Activated CD4-positive, alpha-beta memory T cell treated with anti-CD3 and anti-CD28 coated beads, Interleukin-2, amount 10 ng/mL, durations not matched to agents 7 days and 5 days (primary cell): ENCODE measurements at regions of chr13 and their contacts with region 1.

Region 1: DNA sequence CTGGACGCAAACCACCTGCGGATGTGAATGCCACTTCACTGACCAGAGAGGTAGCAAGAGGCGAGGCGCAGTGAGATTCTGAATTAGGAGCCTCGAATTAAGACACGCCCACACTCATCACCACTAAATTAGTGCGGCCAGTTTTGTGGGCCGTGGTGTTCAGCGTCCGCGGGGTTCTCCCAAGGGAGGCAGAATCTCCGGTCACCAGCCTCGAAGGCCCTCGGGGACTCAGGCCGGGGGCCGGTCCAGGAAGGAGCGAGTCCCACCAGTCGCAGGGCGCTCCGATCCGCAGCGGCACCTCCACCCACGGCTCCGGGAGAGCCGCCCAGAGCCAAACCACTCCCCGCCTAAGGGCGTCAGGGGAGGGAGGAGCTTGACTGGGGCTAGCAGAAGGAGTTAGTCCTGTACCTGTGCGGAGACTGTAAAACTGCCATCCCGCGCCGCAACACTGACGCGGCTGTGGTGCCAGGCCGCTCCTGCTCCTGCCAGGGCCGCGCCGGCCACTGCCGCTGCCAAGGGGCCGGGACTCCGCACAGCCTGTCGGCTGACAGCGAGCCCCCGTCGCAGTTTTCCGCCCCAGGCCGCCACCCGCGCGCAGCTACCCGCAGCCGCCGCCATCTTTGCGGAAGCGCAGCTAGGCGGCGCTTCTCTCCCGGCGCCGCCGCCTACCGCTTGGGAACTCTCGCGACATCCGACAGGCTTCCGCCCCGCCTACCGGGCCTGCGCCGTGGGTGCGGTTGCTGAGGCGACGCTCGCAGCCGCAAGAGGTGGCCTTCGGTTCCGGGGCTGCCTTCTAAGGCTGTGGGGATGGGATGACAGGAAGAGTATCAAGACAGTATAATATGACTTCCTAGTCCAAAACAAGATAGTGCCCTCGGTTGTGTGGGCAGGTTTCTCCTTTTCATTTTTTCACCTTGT is at the start of gene MICU2:
- DNase-seq: peak; percentile 96
- H3K4me3 Mint-ChIP-seq: peak within 1 kb of the TSS; percentile 85
- H3K27ac Mint-ChIP-seq: peak within 1 kb of the TSS; percentile 79
- H3K4me1 Mint-ChIP-seq: peaks cover 35% of the 10 kb centered on the region
- H3K27me3 Mint-ChIP-seq: peaks cover 17% of the 10 kb centered on the region
- total RNA-seq, gene MICU2: 33.8 to 34.0 TPM

Region 2: GRCh38 chr13:21458813-21459701 is 144.7 kb before region 1 on chr13 and contains the start of gene ZDHHC20:
- CTCF ChIA-PET with region 1: no interaction called
- POLR2A ChIA-PET with region 1: interaction called, 14 read pairs
- DNase-seq: peak; percentile 91
- H3K4me3 Mint-ChIP-seq: peak within 1 kb of the TSS; percentile 85
- H3K27ac Mint-ChIP-seq: peak within 1 kb of the TSS; percentile 91
- H3K4me1 Mint-ChIP-seq: peaks cover 34% of the 10 kb centered on the region
- H3K27me3 Mint-ChIP-seq: no peaks in the 10 kb centered on the region
- total RNA-seq, gene ZDHHC20: 92.0 to 103 TPM

Region 3: GRCh38 chr13:21579754-21580316 is 24.0 kb before region 1 on chr13:
- CTCF ChIA-PET with region 1: interaction called, 10 read pairs
- POLR2A ChIA-PET with region 1: interaction called, 16 read pairs
- DNase-seq: no peak
- H3K4me3 Mint-ChIP-seq: no peak overlapping the region
- H3K27ac Mint-ChIP-seq: peak overlapping the region; percentile 72
- H3K4me1 Mint-ChIP-seq: peaks cover 31% of the 10 kb centered on the region
- H3K27me3 Mint-ChIP-seq: no peaks in the 10 kb centered on the region

Region 4: DNA sequence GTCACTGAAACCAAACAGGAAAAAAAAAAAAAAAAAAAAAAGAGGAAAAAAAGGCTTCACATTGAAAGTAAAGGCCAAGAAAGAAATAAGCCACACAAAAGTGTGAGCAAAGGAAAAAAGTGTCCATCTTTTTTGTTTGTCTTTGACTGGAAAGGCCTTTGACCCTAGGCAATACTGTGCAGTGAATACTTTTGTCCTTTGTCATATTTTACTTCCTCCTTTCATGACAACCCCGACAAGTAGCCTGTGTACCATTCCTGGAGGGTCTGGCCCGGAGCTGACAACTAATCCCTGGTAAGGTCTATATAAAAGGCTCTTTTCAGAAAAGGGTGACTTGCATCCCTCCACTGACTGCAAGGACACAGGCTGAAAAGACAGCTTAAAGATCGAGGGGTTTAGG is 13.1 kb after region 1 on chr13:
- CTCF ChIA-PET with region 1: no interaction called
- POLR2A ChIA-PET with region 1: interaction called, 23 read pairs
- DNase-seq: no peak
- H3K4me3 Mint-ChIP-seq: no peak overlapping the region
- H3K27ac Mint-ChIP-seq: no peak overlapping the region
- H3K4me1 Mint-ChIP-seq: peaks cover 4% of the 10 kb centered on the region
- H3K27me3 Mint-ChIP-seq: peaks cover 17% of the 10 kb centered on the region

Region 5: DNA sequence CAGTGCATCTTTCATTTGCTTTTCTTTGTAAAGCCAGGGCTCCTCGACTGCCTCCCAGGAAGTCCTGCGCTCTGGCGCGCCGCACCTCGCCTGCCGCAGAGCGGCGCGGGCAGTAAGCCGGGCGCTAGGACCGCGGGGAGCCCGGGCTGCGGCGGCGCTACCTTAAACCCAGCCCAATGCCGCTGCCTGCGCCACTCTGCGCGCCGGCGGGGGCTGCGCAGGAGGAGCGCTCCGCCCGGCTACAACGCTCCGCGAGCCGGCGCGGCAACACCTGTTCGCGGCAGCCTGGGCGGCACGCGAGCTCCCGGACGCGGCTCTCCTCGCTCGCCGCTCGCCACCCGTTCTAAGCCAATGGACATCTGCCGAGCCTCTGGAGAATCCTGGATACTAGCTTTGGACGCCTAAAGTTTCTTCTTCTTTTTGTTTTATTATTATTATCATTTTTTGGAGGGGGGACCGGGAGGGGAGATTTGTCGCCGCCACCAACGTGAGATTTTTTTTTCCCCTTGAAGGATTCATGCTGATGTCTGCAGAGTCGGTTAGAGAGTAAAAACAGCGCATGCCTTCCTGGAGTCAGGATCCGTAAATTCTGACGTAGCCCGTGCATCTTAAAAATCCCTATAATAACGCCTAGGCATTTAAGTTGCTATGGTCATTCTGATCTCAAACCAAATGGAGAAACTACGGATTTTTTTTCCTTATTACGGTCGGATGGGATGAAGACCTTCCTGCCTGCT is 67.3 kb after region 1 on chr13 and contains the start of gene FGF9:
- CTCF ChIA-PET with region 1: no interaction called
- POLR2A ChIA-PET with region 1: interaction called, 38 read pairs
- DNase-seq: peak; percentile 84
- H3K4me3 Mint-ChIP-seq: peak within 1 kb of the TSS; percentile 79
- H3K27ac Mint-ChIP-seq: peak within 1 kb of the TSS; percentile 42
- H3K4me1 Mint-ChIP-seq: peaks cover 45% of the 10 kb centered on the region
- H3K27me3 Mint-ChIP-seq: peaks cover 64% of the 10 kb centered on the region
- total RNA-seq, gene FGF9: 0.08 to 0.20 TPM